Psoas muscle (tissue), 8 donors: ENCODE measurements at regions of chr3 and their contacts with region 1.

Region 1: GRCh38 chr3:189401196-189401595 is 229.4 kb downstream of the TPRG1 start:
- DNase-seq: no peak
- ATAC-seq: no peak
- H3K4me3 ChIP-seq: no peak overlapping the region
- H3K27ac ChIP-seq: no peak overlapping the region
- H3K4me1 ChIP-seq: peaks cover 16% of the 10 kb centered on the region
- H3K27me3 ChIP-seq: no peaks in the 10 kb centered on the region
- CTCF ChIP-seq: no peak

Region 2: DNA sequence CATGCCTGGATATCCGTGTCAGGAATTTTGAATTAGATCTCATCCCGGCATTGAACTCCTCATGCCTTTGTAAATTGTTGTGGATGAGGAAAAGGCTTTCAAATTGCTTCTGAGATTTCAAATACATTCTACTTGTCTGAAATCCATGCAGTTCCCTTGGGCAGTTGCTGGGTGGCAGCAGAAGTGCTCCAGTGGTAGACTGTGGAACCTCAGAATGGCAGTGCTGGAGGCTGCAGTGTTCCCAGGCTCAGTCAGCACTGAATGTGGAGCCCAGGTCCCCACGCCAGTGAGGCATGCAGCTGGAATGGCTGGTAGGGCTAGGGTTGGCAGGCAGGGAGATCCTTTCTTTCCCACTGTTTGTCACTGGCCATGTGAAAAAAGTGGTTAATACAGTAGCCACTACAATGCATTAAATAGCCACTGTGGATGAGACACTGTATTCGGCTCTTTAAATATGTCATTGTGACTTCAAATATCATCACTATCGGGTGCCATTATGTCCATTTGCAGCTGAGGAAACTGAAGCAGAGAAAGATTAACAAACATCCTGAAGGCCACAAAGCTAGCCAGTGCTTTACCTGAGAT is 130.9 kb before region 1 on chr3:
- intact Hi-C with region 1: no loop called
- DNase-seq: peak; percentile 32 to 77
- ATAC-seq: peak; percentile 90 to 98 (median 96)
- H3K4me3 ChIP-seq: no peak overlapping the region
- H3K27ac ChIP-seq: peak overlapping the region; percentile 53
- H3K4me1 ChIP-seq: peaks cover 29% of the 10 kb centered on the region
- H3K27me3 ChIP-seq: no peaks in the 10 kb centered on the region
- CTCF ChIP-seq: peak; percentile 65

Region 3: GRCh38 chr3:189369636-189370035 is 31.6 kb before region 1 on chr3:
- intact Hi-C with region 1: loop called in 1 of 2 experiments (anchors 2 kb)
- DNase-seq: no peak
- ATAC-seq: no peak
- H3K4me3 ChIP-seq: no peak overlapping the region
- H3K27ac ChIP-seq: no peak overlapping the region
- H3K4me1 ChIP-seq: peaks cover 25% of the 10 kb centered on the region
- H3K27me3 ChIP-seq: no peaks in the 10 kb centered on the region
- CTCF ChIP-seq: no peak